ENCODE measurements at regions of chr22 and their contacts with region 1.

Region 1: GRCh38 chr22:50544078-50544745 is 1.5 kb upstream of the KLHDC7B start:
- DNase-seq: peak; percentile 93
- ATAC-seq: peak; percentile 59
- H3K4me3 Mint-ChIP-seq: peak overlapping the region; percentile 38
- H3K27ac Mint-ChIP-seq: peak overlapping the region; percentile 80
- H3K4me1 Mint-ChIP-seq: peaks cover 58% of the 10 kb centered on the region
- H3K27me3 Mint-ChIP-seq: no peaks in the 10 kb centered on the region
- CTCF ChIP-seq: peak; percentile 73

Region 2: DNA sequence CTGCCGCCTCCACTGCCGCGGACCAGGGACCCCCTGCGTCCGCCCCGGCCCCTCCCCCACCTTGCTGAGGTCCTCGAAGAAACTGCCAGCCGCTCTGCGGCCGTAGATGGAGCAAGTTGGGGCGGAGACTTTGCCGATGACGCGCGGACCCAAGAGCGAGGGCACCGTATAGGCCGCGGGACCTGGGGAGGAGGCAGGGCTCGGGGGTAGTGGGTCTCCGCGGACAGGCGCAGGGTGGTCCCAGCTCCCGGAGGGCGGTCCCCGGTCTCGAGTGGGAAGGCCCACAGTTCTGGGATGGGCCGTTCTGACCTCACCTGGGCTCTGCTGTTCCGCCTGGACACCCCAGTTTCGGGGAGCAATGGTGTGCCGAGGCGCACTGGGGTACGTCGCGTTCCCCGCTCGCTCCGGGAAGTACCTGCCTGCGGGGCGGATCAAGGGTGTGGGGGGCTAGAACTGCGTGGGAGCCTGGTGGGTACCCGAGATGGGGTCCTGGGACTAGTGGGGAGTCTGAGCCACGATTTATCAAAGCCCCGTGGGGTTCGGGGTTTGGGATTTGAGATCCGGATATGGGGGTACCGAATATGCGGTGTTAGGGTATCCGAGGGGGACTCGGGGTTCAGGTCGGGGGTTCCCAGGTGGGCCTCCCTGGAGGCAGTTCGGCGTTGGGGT is 13.2 kb before region 1 on chr22:
- CTCF ChIA-PET with region 1: interaction called, 65 read pairs
- POLR2A ChIA-PET with region 1: interaction called, 175 read pairs
- intact Hi-C with region 1: no loop called
- DNase-seq: peak; percentile 93
- ATAC-seq: peak; percentile 51
- H3K4me3 Mint-ChIP-seq: peak overlapping the region; percentile 89
- H3K27ac Mint-ChIP-seq: peak overlapping the region; percentile 98
- H3K4me1 Mint-ChIP-seq: peaks cover 36% of the 10 kb centered on the region
- H3K27me3 Mint-ChIP-seq: no peaks in the 10 kb centered on the region
- CTCF ChIP-seq: no peak

Region 3: GRCh38 chr22:50556703-50557102 is 12.5 kb after region 1 on chr22:
- CTCF ChIA-PET with region 1: interaction called, 11 read pairs
- POLR2A ChIA-PET with region 1: interaction called, 7 read pairs
- intact Hi-C with region 1: no loop called
- DNase-seq: no peak
- ATAC-seq: no peak
- H3K4me3 Mint-ChIP-seq: no peak overlapping the region
- H3K27ac Mint-ChIP-seq: no peak overlapping the region
- H3K4me1 Mint-ChIP-seq: peaks cover 8% of the 10 kb centered on the region
- H3K27me3 Mint-ChIP-seq: no peaks in the 10 kb centered on the region
- CTCF ChIP-seq: no peak

Measured in activated CD8-positive, alpha-beta T cell treated with anti-CD3 and anti-CD28 coated beads for 36 hours (primary cell).